ENCODE measurements at regions of chr10 and their contacts with region 1.

Region 1: GRCh38 chr10:90912174-90912573 is 8.7 kb downstream of the ANKRD1 start:
- DNase-seq: no peak
- H3K4me3 Mint-ChIP-seq: no peak overlapping the region
- H3K27ac Mint-ChIP-seq: no peak overlapping the region
- H3K4me1 Mint-ChIP-seq: peaks cover 2% of the 10 kb centered on the region
- H3K27me3 Mint-ChIP-seq: no peaks in the 10 kb centered on the region

Region 2: DNA sequence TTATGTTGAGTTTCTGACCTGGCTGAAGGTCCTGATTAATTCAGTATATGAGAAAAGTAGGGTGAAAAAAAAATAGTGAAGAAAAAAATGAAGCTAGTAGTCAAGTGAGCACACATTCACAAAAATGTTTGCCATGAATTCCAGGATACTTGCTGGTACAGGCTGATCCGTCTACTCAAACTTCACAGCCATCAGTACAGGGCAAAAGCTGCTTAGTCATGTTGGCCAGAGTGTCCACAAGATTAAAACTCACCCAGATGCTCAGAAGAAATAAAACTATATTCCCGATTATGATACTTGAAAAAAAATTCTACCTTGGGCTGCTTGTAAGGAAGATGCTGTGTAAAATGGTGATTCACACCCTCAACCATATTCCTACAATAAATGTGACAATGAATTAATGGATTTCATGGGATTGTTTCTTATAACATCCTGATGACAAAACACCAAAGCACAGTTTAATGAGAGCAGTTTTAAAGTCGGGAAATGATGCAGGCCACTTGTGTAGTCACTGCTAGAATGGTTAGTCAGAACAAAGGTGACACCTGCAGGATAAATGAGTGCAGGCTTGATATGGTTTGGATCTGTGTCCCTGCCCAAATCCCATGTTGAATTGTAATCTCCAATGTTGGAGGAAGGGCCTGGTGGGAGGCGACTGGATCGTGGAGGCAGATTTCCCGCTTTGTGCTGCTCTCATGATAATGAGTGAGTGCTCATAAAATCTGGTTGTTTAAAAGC is 57.9 kb after region 1 on chr10:
- CTCF ChIA-PET with region 1: interaction called, 3 read pairs
- intact Hi-C with region 1: loop called (anchors 2 kb)
- DNase-seq: no peak
- H3K4me3 Mint-ChIP-seq: no peak overlapping the region
- H3K27ac Mint-ChIP-seq: no peak overlapping the region
- H3K4me1 Mint-ChIP-seq: no peaks in the 10 kb centered on the region
- H3K27me3 Mint-ChIP-seq: no peaks in the 10 kb centered on the region

Region 3: GRCh38 chr10:91043173-91043910 is 131.2 kb after region 1 on chr10:
- CTCF ChIA-PET with region 1: no interaction called
- intact Hi-C with region 1: loop called (anchors 2 kb)
- DNase-seq: no peak
- H3K4me3 Mint-ChIP-seq: no peak overlapping the region
- H3K27ac Mint-ChIP-seq: no peak overlapping the region
- H3K4me1 Mint-ChIP-seq: no peaks in the 10 kb centered on the region
- H3K27me3 Mint-ChIP-seq: peaks cover 4% of the 10 kb centered on the region

Region 4: GRCh38 chr10:91088300-91089140 is 176.3 kb after region 1 on chr10:
- CTCF ChIA-PET with region 1: interaction called, 6 read pairs
- intact Hi-C with region 1: loop called (anchors 1 kb)
- DNase-seq: no peak
- H3K4me3 Mint-ChIP-seq: no peak overlapping the region
- H3K27ac Mint-ChIP-seq: no peak overlapping the region
- H3K4me1 Mint-ChIP-seq: no peaks in the 10 kb centered on the region
- H3K27me3 Mint-ChIP-seq: no peaks in the 10 kb centered on the region

Region 5: GRCh38 chr10:91367127-91367531 is 455.0 kb after region 1 on chr10:
- CTCF ChIA-PET with region 1: no interaction called
- intact Hi-C with region 1: loop called (anchors 5 kb)
- DNase-seq: peak; percentile 30
- H3K4me3 Mint-ChIP-seq: no peak overlapping the region
- H3K27ac Mint-ChIP-seq: no peak overlapping the region
- H3K4me1 Mint-ChIP-seq: peaks cover 11% of the 10 kb centered on the region
- H3K27me3 Mint-ChIP-seq: peaks cover 34% of the 10 kb centered on the region

Region 6: GRCh38 chr10:92103376-92104090 is 1191.4 kb after region 1 on chr10:
- CTCF ChIA-PET with region 1: no interaction called
- intact Hi-C with region 1: no loop called
- DNase-seq: no peak
- H3K4me3 Mint-ChIP-seq: no peak overlapping the region
- H3K27ac Mint-ChIP-seq: no peak overlapping the region
- H3K4me1 Mint-ChIP-seq: peaks cover 6% of the 10 kb centered on the region
- H3K27me3 Mint-ChIP-seq: no peaks in the 10 kb centered on the region